Activated B cell treated with CpG ODN at 0.5 μM for 24 hours (primary cell): ENCODE measurements at regions of chrX and their contacts with region 1.

Region 1: GRCh38 chrX:68196939-68197791 is 236.1 kb downstream of the OPHN1 start:
- DNase-seq: no peak
- ATAC-seq: no peak
- H3K4me3 Mint-ChIP-seq: no peak overlapping the region
- H3K27ac Mint-ChIP-seq: no peak overlapping the region
- H3K4me1 Mint-ChIP-seq: no peaks in the 10 kb centered on the region
- H3K27me3 Mint-ChIP-seq: no peaks in the 10 kb centered on the region
- CTCF ChIP-seq: no peak

Region 2: DNA sequence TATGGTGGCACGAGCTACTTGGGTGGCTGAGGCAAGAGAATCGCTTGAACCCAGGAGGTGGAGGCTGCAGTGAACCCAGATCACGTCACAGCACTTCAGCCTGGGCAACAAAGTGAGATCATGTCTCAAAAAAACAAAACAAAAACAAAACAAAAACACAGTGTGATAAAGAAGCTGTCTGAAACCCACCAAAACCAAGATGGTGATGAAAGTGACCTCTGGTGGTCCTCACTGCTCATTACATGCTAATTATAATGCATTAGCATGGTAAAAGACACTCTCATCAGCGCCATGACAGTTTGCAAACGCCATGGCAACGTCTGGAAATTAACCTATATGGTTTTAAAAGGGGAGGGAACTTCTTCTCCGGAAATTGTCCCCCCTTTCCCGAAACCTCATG is 265.5 kb after region 1 on chrX:
- CTCF ChIA-PET with region 1: interaction called, 3 read pairs
- POLR2A ChIA-PET with region 1: no interaction called
- intact Hi-C with region 1: loop called (anchors 5 kb)
- DNase-seq: no peak
- ATAC-seq: no peak
- H3K4me3 Mint-ChIP-seq: no peak overlapping the region
- H3K27ac Mint-ChIP-seq: no peak overlapping the region
- H3K4me1 Mint-ChIP-seq: no peaks in the 10 kb centered on the region
- H3K27me3 Mint-ChIP-seq: no peaks in the 10 kb centered on the region
- CTCF ChIP-seq: no peak